Heart left ventricle (tissue), 16 donors: ENCODE measurements at regions of chr9 and their contacts with region 1.

Region 1: GRCh38 chr9:35258676-35259474 is 97.1 kb downstream of the UNC13B start:
- DNase-seq: peak; percentile 62 to 83 (median 68)
- ATAC-seq: peak in 3 of 4 donors; percentile 63 to 83 (median 68)
- H3K4me3 ChIP-seq: no peak overlapping the region
- H3K27ac ChIP-seq: no peak overlapping the region
- H3K4me1 ChIP-seq: peaks cover 0 to 8% (median 0%) of the 10 kb centered on the region in 12 donors
- H3K27me3 ChIP-seq: no peaks in the 10 kb centered on the region
- CTCF ChIP-seq: peak; percentile 50 to 83 (median 73)
- POLR2A ChIP-seq: no peak

Region 2: DNA sequence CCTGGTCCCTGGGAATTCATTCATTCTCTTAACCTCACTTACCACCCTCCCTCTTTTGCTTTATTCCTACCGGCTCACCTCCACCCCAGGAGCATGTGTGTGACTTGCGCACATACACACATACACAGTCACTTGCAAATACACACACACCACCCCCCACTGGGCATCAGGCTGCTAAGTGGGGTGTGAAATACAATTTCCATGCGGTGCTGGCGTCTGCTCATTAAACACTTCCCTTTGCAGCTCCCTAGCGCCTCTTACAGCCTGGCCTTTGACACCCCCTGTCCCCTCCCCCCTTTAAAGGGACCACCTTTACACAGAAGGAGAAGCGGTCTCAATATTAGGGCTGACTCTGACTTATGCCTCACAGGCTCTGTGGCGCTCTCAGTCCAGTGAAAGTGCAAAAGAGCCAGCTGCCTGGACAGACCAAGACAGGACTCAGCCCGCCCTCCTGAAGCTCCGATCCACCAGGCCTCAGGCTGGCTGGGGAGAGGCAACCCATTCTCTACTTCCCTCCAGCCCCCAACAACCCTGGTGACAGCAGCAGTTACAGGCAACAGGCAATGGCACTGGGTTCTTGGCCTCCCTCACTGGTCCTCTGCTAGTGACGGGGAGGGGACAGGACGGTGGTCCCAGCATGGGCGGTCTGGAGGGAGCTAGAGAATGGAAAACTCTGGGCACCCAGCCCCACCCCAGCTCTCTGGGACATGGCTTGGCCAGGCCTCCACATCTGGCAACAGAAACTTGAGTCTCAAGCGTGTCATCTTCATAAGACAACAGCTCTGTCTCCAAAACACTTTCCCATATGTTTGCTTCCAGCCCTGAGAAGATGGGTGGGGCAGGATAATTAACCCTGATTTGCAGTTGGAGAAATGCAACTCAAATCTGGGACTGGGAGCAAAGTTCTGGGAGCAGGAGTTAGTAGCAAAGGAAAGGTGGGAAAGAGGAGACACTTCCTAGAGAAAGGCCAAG is 748.1 kb before region 1 on chr9:
- intact Hi-C with region 1: no loop called
- DNase-seq: no peak
- ATAC-seq: no peak
- H3K4me3 ChIP-seq: no peak overlapping the region
- H3K27ac ChIP-seq: no peak overlapping the region
- H3K4me1 ChIP-seq: peaks cover 0 to 9% (median 0%) of the 10 kb centered on the region in 12 donors
- H3K27me3 ChIP-seq: no peaks in the 10 kb centered on the region
- CTCF ChIP-seq: no peak
- POLR2A ChIP-seq: no peak

Region 3: GRCh38 chr9:35161713-35162604 is 96.9 kb before region 1 on chr9 and contains the start of gene UNC13B:
- intact Hi-C with region 1: loop called in 3 of 10 experiments (anchors 2 to 10 kb)
- DNase-seq: peak; percentile 95 to 97 (median 96)
- ATAC-seq: peak; percentile 98 to 99 (median 99)
- H3K4me3 ChIP-seq: peak within 1 kb of the TSS; percentile 65 to 93 (median 79)
- H3K27ac ChIP-seq: peak within 1 kb of the TSS; percentile 88 to 99 (median 94)
- H3K4me1 ChIP-seq: peaks cover 0 to 34% (median 21%) of the 10 kb centered on the region in 12 donors
- H3K27me3 ChIP-seq: no peaks in the 10 kb centered on the region
- CTCF ChIP-seq: peak in 5 of 12 donors; percentile 22 to 51 (median 33)
- POLR2A ChIP-seq: peak in 1 of 2 donors; percentile 78
- total RNA-seq, gene UNC13B: 18.0 to 30.2 (median 21.2) TPM

Region 4: DNA sequence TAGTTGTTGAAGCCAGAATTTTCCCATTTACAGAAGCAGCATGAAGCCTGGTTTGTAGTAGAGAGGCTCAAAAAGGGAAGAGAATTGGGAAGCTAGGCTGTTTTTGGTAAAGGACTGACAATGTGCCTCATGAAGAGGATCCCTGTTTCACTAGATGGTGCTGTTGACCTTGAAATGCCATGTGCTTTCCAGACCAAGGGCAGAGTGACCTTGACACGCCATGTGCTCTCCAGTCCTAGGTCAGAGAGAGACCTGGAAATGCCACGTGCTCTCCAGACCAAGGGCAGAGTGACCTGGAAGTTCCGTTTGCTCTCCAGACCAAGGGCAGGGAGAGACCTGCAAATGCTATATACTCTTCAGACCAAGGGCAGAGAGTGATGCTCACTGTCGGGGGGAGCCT is 65.1 kb before region 1 on chr9:
- intact Hi-C with region 1: loop called in 1 of 10 experiments (anchors 10 kb)
- DNase-seq: no peak
- ATAC-seq: no peak
- H3K4me3 ChIP-seq: no peak overlapping the region
- H3K27ac ChIP-seq: no peak overlapping the region
- H3K4me1 ChIP-seq: peaks cover 0 to 4% (median 0%) of the 10 kb centered on the region in 12 donors
- H3K27me3 ChIP-seq: no peaks in the 10 kb centered on the region
- CTCF ChIP-seq: peak in 3 of 12 donors; percentile 10 to 17 (median 12)
- POLR2A ChIP-seq: no peak

Region 5: DNA sequence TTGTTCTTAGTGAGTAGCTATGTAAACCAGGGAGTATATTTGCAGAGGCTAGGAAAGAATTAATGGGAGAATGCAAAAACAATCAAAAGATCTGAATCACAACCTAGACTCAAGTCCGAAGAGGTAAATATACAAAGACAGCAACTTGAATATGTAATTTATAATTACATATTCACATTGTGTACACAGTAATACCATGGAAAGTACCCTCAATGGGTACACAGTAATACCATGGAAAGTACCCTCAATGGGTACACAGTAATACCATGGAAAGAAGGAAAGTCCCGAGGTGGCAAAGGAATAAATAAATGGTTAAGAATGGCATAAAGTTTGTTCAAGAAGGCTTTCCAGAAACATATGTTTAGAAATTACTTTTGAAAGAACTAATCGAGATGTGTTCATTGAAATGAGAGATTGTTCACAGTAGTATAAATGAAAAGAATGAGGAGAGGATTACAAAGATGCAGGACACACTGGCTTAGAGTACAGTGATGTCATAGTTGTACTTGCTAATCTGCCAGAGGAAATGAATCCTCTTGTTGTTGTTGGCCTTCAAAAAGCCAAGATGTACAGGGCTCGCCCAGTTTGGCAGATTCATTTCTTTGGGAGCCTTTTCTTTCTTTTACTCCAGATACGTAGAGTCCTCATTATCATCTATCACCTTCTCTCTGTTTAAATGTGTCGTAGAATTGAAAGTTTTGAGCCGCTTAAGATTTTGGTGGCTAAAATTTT is 18.9 kb after region 1 on chr9:
- intact Hi-C with region 1: no loop called
- DNase-seq: peak in 1 of 5 donors; percentile 8
- ATAC-seq: peak; percentile 72 to 92 (median 88)
- H3K4me3 ChIP-seq: peak overlapping the region in 3 of 12 donors; percentile 1 to 23 (median 14)
- H3K27ac ChIP-seq: peak overlapping the region in 11 of 12 donors; percentile 9 to 81 (median 31)
- H3K4me1 ChIP-seq: peaks cover 0 to 31% (median 12%) of the 10 kb centered on the region in 12 donors
- H3K27me3 ChIP-seq: no peaks in the 10 kb centered on the region
- CTCF ChIP-seq: no peak
- POLR2A ChIP-seq: no peak

Region 6: DNA sequence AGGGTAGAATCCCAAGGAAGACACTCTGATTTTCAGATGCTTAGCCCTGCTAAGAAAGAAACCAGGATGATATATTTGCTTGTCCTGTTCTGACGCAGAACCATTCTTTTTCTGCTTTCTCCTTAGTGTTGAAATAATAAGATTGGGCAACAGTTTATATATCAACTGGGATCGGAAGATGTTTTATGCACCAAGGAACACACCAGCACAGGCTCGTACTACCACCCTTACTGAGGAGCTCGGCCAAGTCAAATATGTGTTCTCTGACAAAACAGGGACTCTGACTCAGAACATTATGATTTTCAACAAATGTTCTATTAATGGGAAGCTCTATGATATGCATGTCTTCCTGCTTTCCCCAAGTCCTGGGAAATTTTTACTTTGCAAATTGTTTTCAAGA is 212.0 kb after region 1 on chr9:
- intact Hi-C with region 1: loop called in 7 of 10 experiments (anchors 2 to 10 kb)
- DNase-seq: no peak
- ATAC-seq: no peak
- H3K4me3 ChIP-seq: no peak overlapping the region
- H3K27ac ChIP-seq: no peak overlapping the region
- H3K4me1 ChIP-seq: no peaks in the 10 kb centered on the region
- H3K27me3 ChIP-seq: no peaks in the 10 kb centered on the region
- CTCF ChIP-seq: no peak
- POLR2A ChIP-seq: no peak

Region 7: GRCh38 chr9:35690431-35691333 is 431.8 kb after region 1 on chr9:
- intact Hi-C with region 1: no loop called
- DNase-seq: peak; percentile 87 to 89 (median 89)
- ATAC-seq: peak; percentile 23 to 65 (median 60)
- H3K4me3 ChIP-seq: peak overlapping the region; percentile 61 to 93 (median 74)
- H3K27ac ChIP-seq: peak overlapping the region; percentile 88 to 98 (median 97)
- H3K4me1 ChIP-seq: peaks cover 2 to 44% (median 26%) of the 10 kb centered on the region in 12 donors
- H3K27me3 ChIP-seq: no peaks in the 10 kb centered on the region
- CTCF ChIP-seq: no peak
- POLR2A ChIP-seq: peak in 1 of 2 donors; percentile 34

Region 8: GRCh38 chr9:35962126-35962906 is 703.4 kb after region 1 on chr9:
- intact Hi-C with region 1: no loop called
- DNase-seq: peak; percentile 29 to 70 (median 55)
- ATAC-seq: peak; percentile 24 to 90 (median 42)
- H3K4me3 ChIP-seq: peak overlapping the region in 4 of 12 donors; percentile 6 to 29 (median 13)
- H3K27ac ChIP-seq: peak overlapping the region in 1 of 12 donors; percentile 17
- H3K4me1 ChIP-seq: peaks cover 0 to 7% (median 0%) of the 10 kb centered on the region in 12 donors
- H3K27me3 ChIP-seq: no peaks in the 10 kb centered on the region
- CTCF ChIP-seq: no peak
- POLR2A ChIP-seq: no peak